ENCODE measurements at regions of chr19 and their contacts with region 1.

Region 1: GRCh38 chr19:48965040-48965805 is at the start of gene FTL:
- DNase-seq: peak in 1 of 2 donors; percentile 99
- H3K4me3 ChIP-seq: peak within 1 kb of the TSS; percentile 72 to 87
- H3K27ac ChIP-seq: peak within 1 kb of the TSS; percentile 96
- H3K4me1 ChIP-seq: peaks cover 49% of the 10 kb centered on the region
- H3K27me3 ChIP-seq: no peaks in the 10 kb centered on the region
- CTCF ChIP-seq: no peak
- POLR2A ChIP-seq: peak; percentile 43 to 100
- total RNA-seq, gene FTL: 4,380 TPM

Region 2: DNA sequence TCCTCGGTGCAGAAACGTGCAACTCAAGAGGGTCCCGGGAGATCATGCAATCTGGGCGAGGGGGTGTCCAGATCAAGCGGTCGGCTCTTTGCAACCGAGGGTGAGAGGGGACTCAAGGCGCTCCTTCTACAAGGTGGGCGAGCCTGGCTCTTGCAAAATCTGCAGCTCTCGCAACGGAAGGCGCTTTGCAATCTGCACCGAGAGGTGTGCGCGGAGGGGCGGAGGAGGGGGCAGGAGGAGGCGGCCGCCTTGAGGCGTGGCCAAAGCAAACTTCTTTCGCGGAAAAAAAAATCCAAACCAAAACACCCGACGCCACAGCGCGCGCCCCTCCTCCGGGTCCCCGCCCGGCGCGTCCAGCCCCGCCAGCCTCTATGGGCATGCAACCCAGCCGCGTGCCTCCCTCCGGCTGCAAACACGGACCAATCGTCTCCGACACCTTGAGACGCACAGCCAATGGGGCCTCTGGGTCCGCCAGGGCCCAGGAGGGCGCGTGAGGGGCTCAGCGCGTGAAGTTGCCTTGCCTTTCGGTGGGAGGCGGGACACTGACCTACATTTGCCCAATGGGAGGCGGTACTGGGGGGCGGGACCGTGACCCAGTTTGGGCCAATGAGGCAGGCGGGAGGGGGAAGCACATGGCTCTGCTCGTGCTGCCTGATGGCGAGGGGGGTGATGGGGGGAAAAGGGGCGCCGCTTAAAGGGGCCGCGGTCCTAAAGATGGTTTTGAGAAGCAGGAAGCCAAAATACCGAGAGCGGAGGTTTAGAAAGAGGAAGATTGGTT is 327.9 kb before region 1 on chr19 and contains the start of gene DBP:
- intact Hi-C with region 1: loop called (anchors 10 kb)
- DNase-seq: peak in 1 of 2 donors; percentile 100
- H3K4me3 ChIP-seq: peak within 1 kb of the TSS; percentile 54 to 69
- H3K27ac ChIP-seq: peak within 1 kb of the TSS; percentile 99
- H3K4me1 ChIP-seq: peaks cover 55% of the 10 kb centered on the region
- H3K27me3 ChIP-seq: no peaks in the 10 kb centered on the region
- CTCF ChIP-seq: no peak
- POLR2A ChIP-seq: peak in 1 of 2 donors; percentile 65
- total RNA-seq, gene DBP: 4.9 TPM

Region 3: DNA sequence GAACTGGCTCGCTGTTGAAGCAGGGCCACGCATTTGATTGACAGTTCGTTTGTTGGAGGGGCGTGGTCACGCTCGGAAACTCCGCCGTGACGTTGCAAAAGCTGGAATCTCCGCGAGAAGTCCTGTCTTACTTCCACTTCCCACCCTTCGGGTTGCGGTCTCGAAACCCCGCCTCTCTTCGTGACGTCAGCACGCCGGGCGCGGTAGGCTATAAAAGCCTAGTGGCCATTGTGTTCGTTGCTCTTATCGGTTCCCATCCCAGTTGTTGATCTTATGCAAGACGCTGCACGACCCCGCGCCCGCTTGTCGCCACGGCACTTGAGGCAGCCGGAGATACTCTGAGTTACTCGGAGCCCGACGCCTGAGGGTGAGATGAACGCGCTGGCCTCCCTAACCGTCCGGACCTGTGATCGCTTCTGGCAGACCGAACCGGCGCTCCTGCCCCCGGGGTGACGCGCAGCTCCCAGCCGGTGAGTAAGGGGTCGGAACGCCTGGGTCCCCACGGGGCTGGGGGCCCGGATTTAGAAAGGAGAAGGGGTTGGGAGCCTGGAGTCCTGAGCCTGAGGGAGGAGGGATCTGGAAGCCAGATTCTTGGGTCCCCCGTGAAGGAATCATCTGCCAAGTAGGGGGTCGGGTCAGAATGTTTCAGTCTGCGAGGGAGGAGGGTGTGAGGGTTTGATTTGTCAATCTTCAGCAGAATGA is 92.9 kb before region 1 on chr19 and contains the start of gene PPP1R15A:
- intact Hi-C with region 1: loop called (anchors 10 kb)
- DNase-seq: peak; percentile 100
- H3K4me3 ChIP-seq: peak within 1 kb of the TSS; percentile 88 to 99
- H3K27ac ChIP-seq: peak within 1 kb of the TSS; percentile 100
- H3K4me1 ChIP-seq: peaks cover 43% of the 10 kb centered on the region
- H3K27me3 ChIP-seq: no peaks in the 10 kb centered on the region
- CTCF ChIP-seq: peak in 1 of 3 experiments; percentile 49
- POLR2A ChIP-seq: peak in 1 of 2 donors; percentile 99
- total RNA-seq, gene PPP1R15A: 52.1 TPM

Measured in vagina (tissue), 2 donors.